Endothelial cell of umbilical vein (primary cell): ENCODE measurements at regions of chr1 and their contacts with region 1.

Region 1: GRCh38 chr1:16078925-16079656 is 5.6 kb upstream of the FAM131C start:
- DNase-seq: peak; percentile 76
- H3K4me3 ChIP-seq: no peak overlapping the region
- H3K27ac ChIP-seq: no peak overlapping the region
- H3K4me1 ChIP-seq: peaks cover 6% of the 10 kb centered on the region
- H3K27me3 ChIP-seq: no peaks in the 10 kb centered on the region
- CTCF ChIP-seq: peak; percentile 92 to 93
- POLR2A ChIP-seq: no peak

Region 2: DNA sequence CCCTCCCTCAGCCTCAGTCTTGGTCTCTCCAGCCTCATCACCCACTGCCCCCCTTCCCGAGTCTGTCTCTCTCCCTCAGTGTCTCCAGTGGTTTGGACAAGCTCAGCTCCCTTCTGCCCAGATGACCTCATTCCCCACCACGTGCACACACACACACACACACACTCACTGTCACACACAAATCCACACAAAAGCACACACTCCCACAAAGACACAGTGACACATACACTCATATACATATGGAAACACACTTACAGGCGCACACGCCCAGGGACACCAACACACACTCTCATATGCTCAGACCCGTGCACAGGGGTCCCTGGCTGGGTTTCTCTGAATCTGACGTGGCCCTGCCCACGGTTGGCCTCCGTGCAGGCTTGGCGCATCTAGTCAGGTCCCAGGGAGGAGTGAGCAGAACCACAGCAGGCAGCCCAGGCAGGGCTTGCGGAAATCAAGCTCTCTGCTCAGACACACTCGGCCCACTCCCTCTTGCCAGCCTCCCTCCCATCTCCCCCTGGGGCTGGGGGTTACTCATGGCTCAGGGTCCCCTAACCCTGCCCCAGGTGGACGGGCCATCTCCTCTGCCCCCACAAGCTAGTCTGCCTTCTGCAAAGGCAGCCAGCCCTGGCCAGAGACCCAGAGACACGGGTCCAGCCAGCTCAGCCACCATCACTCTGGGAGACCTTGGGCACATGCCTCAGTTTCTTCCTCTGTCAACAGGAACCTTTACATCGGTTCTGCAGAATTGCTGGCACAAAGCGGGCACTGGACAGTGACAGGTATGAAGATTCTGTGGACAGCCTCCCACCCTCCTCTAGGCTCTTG is 32.9 kb after region 1 on chr1:
- CTCF ChIA-PET with region 1: interaction called, 17 read pairs
- POLR2A ChIA-PET with region 1: no interaction called
- dilution Hi-C with region 1: no loop called
- intact Hi-C with region 1: no loop called
- DNase-seq: no peak
- H3K4me3 ChIP-seq: no peak overlapping the region
- H3K27ac ChIP-seq: no peak overlapping the region
- H3K4me1 ChIP-seq: peaks cover 3% of the 10 kb centered on the region
- H3K27me3 ChIP-seq: no peaks in the 10 kb centered on the region
- CTCF ChIP-seq: no peak
- POLR2A ChIP-seq: no peak

Region 3: GRCh38 chr1:16134066-16134801 is 55.1 kb after region 1 on chr1:
- CTCF ChIA-PET with region 1: interaction called, 27 read pairs
- POLR2A ChIA-PET with region 1: no interaction called
- dilution Hi-C with region 1: no loop called
- intact Hi-C with region 1: no loop called
- DNase-seq: no peak
- H3K4me3 ChIP-seq: no peak overlapping the region
- H3K27ac ChIP-seq: peak overlapping the region; percentile 19
- H3K4me1 ChIP-seq: peaks cover 18% of the 10 kb centered on the region
- H3K27me3 ChIP-seq: no peaks in the 10 kb centered on the region
- CTCF ChIP-seq: no peak
- POLR2A ChIP-seq: no peak

Region 4: DNA sequence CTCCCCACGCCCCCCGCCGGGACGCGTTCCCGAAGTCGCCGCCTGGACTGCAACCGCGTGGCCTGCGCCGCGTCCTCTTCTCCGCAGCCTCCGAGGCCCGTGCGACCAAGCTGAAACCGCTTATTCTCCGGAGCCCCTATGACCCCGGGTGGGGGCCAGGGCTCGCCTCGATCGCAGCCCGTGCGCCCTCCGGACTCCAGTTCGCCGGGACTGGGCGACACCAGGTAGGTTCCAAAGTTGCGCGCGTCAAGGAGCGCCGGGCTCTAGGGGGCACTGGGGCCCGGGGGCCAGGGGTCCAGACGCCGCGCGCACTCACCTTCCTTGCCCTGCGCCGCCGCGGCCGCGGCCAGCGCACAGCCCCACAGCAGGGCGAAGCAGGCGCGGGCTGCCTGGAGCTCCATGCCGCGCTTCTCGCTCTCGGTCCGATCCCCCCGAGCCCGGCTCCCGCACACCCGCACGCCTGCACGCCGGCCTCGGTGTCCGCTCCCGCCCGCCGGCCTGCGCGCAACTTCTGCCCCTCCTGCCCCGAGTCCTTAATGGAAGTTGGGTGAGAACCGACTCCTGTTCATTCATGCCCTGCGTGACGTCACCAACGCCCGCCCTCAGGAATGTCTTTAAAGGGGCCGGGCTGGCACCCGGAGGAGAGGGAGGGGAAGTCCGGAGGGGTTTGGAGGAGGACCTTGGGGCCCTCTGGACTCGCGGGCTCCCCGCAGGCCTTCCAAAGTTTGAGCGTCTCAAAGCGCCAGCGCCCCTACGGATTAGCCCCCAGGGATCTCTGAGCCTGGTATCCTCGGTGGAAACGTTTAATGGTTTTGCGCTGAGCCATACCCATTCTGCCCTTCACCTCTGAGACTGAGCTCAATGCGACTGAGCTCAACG is 76.7 kb after region 1 on chr1 and contains the start of gene EPHA2:
- CTCF ChIA-PET with region 1: interaction called, 154 read pairs
- POLR2A ChIA-PET with region 1: interaction called, 3 read pairs
- dilution Hi-C with region 1: no loop called
- intact Hi-C with region 1: loop called (anchors 1 kb)
- DNase-seq: peak; percentile 90
- H3K4me3 ChIP-seq: peak within 1 kb of the TSS; percentile 65 to 88 (median 87)
- H3K27ac ChIP-seq: peak within 1 kb of the TSS; percentile 84
- H3K4me1 ChIP-seq: peaks cover 42% of the 10 kb centered on the region
- H3K27me3 ChIP-seq: no peaks in the 10 kb centered on the region
- CTCF ChIP-seq: no peak
- POLR2A ChIP-seq: peak; percentile 99
- total RNA-seq, gene EPHA2: 125 and 141 TPM in 2 replicates

Region 5: GRCh38 chr1:16199157-16199501 is 120.0 kb after region 1 on chr1:
- CTCF ChIA-PET with region 1: interaction called, 353 read pairs
- POLR2A ChIA-PET with region 1: no interaction called
- dilution Hi-C with region 1: no loop called
- intact Hi-C with region 1: no loop called
- DNase-seq: no peak
- H3K4me3 ChIP-seq: no peak overlapping the region
- H3K27ac ChIP-seq: no peak overlapping the region
- H3K4me1 ChIP-seq: no peaks in the 10 kb centered on the region
- H3K27me3 ChIP-seq: no peaks in the 10 kb centered on the region
- CTCF ChIP-seq: no peak
- POLR2A ChIP-seq: no peak

Region 6: DNA sequence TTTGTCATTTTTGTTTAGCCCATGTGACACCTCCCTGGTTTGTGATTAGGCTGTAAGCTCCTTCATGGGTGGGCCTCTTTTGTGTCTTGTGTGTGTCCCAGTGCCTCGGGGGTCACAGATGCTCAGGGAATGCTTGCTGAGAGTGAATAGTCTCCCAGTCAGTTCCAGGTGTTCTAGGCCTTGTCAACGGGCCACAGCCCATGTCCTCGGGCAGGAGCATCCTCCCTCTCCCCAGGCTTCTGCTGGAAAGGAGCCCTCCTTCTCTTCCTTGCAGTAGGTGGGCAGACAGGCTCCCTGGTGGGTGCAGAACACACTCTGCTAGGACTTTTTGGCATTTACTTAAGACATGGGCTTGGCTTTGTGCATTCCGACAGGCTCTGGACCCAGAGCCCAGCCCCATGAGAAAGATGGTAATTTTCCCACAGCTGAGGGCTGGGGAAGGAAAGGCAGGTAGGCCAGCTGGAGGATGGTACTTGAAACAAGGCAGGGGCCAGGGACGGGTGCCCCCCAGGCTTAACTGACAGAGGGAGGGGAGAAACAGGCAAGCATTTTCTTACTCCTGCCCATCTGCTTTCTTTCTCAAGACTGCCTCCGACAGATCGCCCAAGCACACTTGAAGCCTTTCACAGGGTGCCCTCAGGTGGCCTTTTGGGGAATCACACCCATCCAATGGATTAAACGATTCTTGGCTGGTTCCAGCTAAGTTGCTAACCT is 165.0 kb after region 1 on chr1:
- CTCF ChIA-PET with region 1: interaction called, 179 read pairs
- POLR2A ChIA-PET with region 1: no interaction called
- dilution Hi-C with region 1: no loop called
- intact Hi-C with region 1: loop called (anchors 1 kb)
- DNase-seq: peak; percentile 87
- H3K4me3 ChIP-seq: no peak overlapping the region
- H3K27ac ChIP-seq: no peak overlapping the region
- H3K4me1 ChIP-seq: peaks cover 17% of the 10 kb centered on the region
- H3K27me3 ChIP-seq: no peaks in the 10 kb centered on the region
- CTCF ChIP-seq: peak; percentile 83 to 85
- POLR2A ChIP-seq: no peak